Colonic mucosa (tissue), 4 donors: ENCODE measurements at regions of chr20 and their contacts with region 1.

Region 1: GRCh38 chr20:9078826-9079731 is 10.2 kb downstream of the PLCB4 start:
- DNase-seq: no peak
- H3K4me3 ChIP-seq: no peak overlapping the region
- H3K27ac ChIP-seq: no peak overlapping the region
- H3K4me1 ChIP-seq: peaks cover 6% of the 10 kb centered on the region
- H3K27me3 ChIP-seq: no peaks in the 10 kb centered on the region
- CTCF ChIP-seq: no peak

Region 2: DNA sequence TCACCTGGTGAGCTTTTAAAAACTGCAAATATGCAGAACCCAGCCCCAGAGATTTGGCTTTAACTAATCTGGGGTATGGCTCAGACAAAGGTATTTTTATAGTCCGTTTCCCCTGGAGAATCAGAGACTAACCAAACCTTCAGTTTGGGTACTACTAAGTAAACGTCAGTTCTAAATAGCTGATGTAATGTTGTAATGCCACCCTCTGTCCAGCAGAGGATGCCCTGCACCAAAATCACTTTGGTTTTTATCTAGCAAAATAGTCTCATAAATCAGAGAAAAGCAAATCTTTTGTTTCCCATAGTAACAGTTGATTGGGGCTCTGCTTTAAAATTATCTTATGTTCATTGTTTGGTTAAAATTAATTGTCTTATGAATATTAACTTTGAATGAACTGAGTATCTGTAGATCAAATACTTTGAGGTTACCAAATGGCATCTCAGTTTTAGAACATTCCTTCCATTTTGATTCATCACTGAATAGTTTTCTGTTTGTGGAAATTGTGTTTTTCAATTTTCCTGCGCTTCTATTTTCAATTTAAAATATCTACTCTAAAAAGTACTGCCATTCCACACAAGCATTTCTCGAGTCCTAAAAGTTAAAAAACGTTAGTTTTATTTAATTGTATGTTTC is 288.5 kb before region 1 on chr20:
- intact Hi-C with region 1: no loop called
- DNase-seq: peak; percentile 63
- H3K4me3 ChIP-seq: no peak overlapping the region
- H3K27ac ChIP-seq: no peak overlapping the region
- H3K4me1 ChIP-seq: peaks cover 4% of the 10 kb centered on the region
- H3K27me3 ChIP-seq: no peaks in the 10 kb centered on the region
- CTCF ChIP-seq: peak; percentile 94

Region 3: GRCh38 chr20:9353180-9353915 is 274.3 kb after region 1 on chr20:
- intact Hi-C with region 1: loop called (anchors 5 kb)
- DNase-seq: no peak
- H3K4me3 ChIP-seq: no peak overlapping the region
- H3K27ac ChIP-seq: no peak overlapping the region
- H3K4me1 ChIP-seq: no peaks in the 10 kb centered on the region
- H3K27me3 ChIP-seq: no peaks in the 10 kb centered on the region
- CTCF ChIP-seq: no peak

Region 4: GRCh38 chr20:9668381-9668780 is 589.3 kb after region 1 on chr20:
- intact Hi-C with region 1: no loop called
- DNase-seq: no peak
- H3K4me3 ChIP-seq: no peak overlapping the region
- H3K27ac ChIP-seq: no peak overlapping the region
- H3K4me1 ChIP-seq: no peaks in the 10 kb centered on the region
- H3K27me3 ChIP-seq: no peaks in the 10 kb centered on the region
- CTCF ChIP-seq: no peak